ENCODE measurements at regions of chr4 and their contacts with region 1.

Region 1: DNA sequence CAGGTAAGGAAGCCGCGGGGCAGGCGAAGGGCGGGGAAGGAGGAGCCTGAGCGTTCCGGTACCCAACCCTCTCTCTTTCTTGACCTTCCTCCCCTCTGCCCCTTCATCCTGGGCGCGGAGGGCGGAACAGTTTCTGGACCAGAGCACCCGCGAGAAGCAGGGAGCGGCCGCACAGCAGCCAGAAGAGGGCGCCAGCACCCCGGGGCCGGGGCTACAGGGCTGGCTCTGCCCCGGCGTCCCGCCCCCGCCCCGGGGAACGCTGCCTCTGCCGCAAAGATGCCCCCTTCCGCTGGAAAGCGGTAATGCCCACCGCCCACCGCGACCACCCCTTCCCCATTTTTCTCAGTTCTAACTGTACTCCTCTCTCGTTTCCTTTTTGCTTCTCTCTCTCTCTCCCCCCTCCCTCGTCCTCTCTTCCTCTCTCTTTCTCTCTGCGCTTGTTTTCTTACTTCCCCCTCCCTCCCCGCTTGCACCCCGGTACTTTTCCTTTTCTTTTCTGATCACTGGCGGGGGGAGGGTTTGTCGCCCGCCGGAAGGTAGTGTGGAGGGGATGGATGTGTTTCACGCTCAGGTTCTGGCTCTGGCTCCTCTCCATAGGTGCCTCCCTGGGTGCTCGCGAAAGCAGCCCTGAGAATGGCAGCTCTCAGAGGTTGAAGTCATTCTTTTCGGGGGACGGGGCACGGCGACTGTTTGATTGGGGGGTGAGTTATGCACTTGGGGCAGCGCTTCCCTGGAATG is 13.1 kb upstream of the PRDM8 start:
- ATAC-seq: peak; percentile 88 to 98 (median 91)
- H3K4me3 ChIP-seq: peak overlapping the region; percentile 34 to 45 (median 41)
- H3K27ac ChIP-seq: peak overlapping the region in 1 of 2 donors; percentile 59
- H3K4me1 ChIP-seq: peaks cover 22 to 32% of the 10 kb centered on the region in 2 donors

Region 2: DNA sequence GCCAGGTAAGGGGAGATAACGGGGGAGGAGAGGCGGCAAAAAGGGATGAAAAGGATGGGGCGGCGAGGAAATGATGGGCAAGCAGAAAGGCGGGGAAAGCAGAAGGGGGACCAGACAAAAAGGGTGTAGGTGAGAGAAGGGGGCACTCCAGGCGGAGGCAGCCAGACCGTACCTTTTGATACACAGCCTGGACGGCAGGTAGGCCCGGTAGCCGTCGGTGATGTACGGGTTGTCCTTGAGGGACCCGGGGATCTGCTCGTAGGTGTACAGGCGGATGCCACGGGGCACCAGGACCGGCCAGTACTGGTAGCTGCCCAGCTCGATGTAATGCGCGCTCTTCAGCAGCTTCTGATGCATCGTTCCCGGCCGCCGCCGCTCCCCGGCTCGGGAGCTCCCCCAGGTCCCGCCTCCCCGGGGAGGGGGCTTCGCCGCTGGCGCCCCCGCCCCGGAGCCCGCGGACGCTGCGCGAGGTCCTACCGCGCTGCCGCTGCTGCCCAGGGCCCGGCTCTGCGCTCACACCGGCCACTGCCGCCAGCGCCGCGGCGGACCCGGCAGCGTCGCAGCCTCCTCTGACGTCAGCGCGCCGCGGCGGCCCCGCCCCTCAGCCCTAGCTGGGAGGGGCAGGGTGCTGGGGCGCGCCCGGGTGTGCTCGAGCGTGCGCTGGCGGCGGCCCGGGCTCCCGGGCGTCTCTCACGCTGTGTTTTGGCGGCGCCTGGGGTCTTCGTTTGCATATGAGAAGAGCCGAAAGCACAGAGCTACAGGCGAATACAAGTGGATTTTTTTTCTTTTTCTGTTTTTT is 1245.2 kb before region 1 on chr4 and contains the start of gene PAQR3:
- in situ Hi-C with region 1: loop called in 1 of 9 experiments (anchors 25 kb)
- ATAC-seq: peak; percentile 92 to 98 (median 94)
- H3K4me3 ChIP-seq: peak within 1 kb of the TSS; percentile 54 to 80 (median 72)
- H3K27ac ChIP-seq: peak within 1 kb of the TSS; percentile 47 to 59
- H3K4me1 ChIP-seq: peaks cover 15 to 29% of the 10 kb centered on the region in 2 donors
- total RNA-seq, gene PAQR3: 18.6 to 84.1 (median 61.6) TPM

Region 3: DNA sequence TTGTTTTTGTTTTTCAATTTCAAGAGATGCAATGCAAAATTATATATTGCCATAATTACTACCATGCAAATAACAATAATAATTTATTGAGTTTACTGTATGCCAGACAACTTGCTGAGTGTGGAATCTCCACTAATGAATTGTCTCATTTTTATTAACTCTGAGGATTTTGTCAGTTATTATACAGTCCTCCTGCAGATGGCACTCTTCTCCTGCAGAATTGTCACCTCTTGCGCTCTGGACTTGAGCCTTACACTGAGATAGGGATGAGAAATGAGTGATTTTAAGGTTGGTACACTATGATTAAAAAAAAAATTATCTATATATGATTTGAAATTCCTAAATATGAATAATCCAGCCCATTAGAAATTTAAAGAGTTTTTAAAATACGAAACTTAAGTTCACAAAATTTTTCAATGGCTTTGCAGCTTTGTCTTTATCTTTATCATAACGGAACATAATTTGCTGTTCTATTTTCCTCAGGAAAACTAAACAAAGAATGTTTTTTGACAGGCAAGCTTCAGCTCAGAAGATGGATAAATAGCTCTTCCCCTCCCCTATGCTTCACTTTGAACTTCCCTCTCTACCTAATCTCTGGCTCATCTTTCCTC is 1232.3 kb before region 1 on chr4:
- in situ Hi-C with region 1: loop called in 2 of 9 experiments (anchors 25 kb)
- ATAC-seq: peak; percentile 43 to 67 (median 57)
- H3K4me3 ChIP-seq: no peak overlapping the region
- H3K27ac ChIP-seq: no peak overlapping the region
- H3K4me1 ChIP-seq: peaks cover 4 to 17% of the 10 kb centered on the region in 2 donors

Region 4: GRCh38 chr4:79042079-79042674 is 1142.0 kb before region 1 on chr4:
- in situ Hi-C with region 1: loop called in 1 of 9 experiments (anchors 25 kb)
- ATAC-seq: peak in 4 of 8 experiments; percentile 33 to 61 (median 44)
- H3K4me3 ChIP-seq: no peak overlapping the region
- H3K27ac ChIP-seq: no peak overlapping the region
- H3K4me1 ChIP-seq: peaks cover 26 to 48% of the 10 kb centered on the region in 2 donors

Region 5: GRCh38 chr4:80097400-80098177 is 86.6 kb before region 1 on chr4:
- in situ Hi-C with region 1: loop called in 1 of 9 experiments (anchors 25 kb)
- ATAC-seq: peak in 3 of 8 experiments; percentile 84 to 89 (median 88)
- H3K4me3 ChIP-seq: no peak overlapping the region
- H3K27ac ChIP-seq: no peak overlapping the region
- H3K4me1 ChIP-seq: no peaks in the 10 kb centered on the region

Region 6: DNA sequence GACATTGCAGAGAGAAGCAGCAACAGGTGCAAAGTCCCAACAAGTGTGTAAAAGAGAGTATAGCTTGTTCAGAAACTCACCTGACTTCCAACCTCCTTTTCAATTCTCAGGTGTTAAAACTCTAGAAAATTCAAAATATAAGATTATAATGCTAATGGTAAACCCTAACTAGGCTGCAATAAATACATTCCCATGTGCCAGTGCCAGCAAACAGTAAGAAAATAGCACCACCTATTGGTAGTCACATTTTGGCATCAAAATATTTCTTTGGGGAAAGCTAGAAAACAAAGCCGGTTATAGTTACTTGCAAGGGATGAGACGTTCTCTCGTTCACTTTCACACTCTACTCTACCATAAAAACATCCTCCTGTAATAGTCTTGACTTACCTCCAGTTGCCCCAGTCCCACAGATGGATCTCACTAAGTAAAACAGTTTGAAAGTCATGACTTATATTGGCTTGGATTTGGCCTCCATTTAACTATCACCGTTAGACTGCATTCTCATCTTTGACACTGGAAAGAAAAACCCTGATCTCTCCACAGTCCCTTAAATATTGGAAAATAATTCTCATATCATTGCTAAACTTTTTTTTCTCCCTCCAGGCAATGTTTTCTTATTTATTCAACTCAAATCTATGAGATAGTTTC is 855.9 kb after region 1 on chr4:
- in situ Hi-C with region 1: loop called in 1 of 9 experiments (anchors 25 kb)
- ATAC-seq: peak in 3 of 8 experiments; percentile 44 to 70 (median 52)
- H3K4me3 ChIP-seq: no peak overlapping the region
- H3K27ac ChIP-seq: no peak overlapping the region
- H3K4me1 ChIP-seq: no peaks in the 10 kb centered on the region